ENCODE measurements at regions of chr7 and their contacts with region 1.

Region 1: DNA sequence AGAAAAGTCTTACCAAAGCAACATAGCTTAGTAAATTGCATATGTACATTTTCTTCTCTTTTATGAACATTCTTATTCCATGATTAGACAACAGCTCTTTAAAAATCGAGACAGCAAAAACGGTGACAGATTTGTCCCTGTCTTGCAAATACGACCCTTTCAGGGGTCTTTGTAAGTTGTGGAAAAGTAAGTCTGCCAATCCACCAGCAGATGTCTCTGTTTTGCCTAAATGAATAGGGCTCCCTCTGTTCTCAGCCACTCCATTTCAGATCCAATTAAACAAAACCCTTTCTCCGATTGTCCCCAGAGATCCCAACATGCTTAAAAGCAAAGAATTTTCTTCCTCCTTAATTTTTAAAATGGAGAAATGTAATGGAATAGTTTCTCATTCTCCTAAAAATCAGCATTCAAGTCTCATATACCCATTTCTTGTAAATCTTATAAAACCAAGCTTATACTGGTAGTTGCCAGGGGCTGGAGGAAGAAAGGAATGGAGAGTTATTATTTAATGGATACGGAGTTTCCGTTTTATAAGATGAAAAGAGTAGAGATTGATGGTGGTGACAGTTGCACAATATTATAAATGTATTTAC is 61.0 kb upstream of the NFE2L3 start:
- H3K4me3 ChIP-seq: no peak overlapping the region
- H3K27ac ChIP-seq: no peak overlapping the region; the same call in 1 of the 2 replicates
- H3K4me1 ChIP-seq: no peaks in the 10 kb centered on the region
- CTCF ChIP-seq: peak; percentile 49

Region 2: GRCh38 chr7:26071622-26072456 is 19.2 kb before region 1 on chr7:
- CTCF ChIA-PET with region 1: interaction called, 11 read pairs
- POLR2A ChIA-PET with region 1: no interaction called
- H3K4me3 ChIP-seq: no peak overlapping the region
- H3K27ac ChIP-seq: no peak overlapping the region
- H3K4me1 ChIP-seq: peaks cover 13% of the 10 kb centered on the region
- CTCF ChIP-seq: no peak

Region 3: GRCh38 chr7:26103596-26103995 is 12.6 kb after region 1 on chr7:
- CTCF ChIA-PET with region 1: interaction called, 20 read pairs
- POLR2A ChIA-PET with region 1: no interaction called
- H3K4me3 ChIP-seq: no peak overlapping the region
- H3K27ac ChIP-seq: no peak overlapping the region
- H3K4me1 ChIP-seq: no peaks in the 10 kb centered on the region
- CTCF ChIP-seq: no peak

Region 4: GRCh38 chr7:26187380-26188205 is 96.6 kb after region 1 on chr7:
- CTCF ChIA-PET with region 1: interaction called, 21 read pairs
- POLR2A ChIA-PET with region 1: interaction called, 9 read pairs
- H3K4me3 ChIP-seq: no peak overlapping the region
- H3K27ac ChIP-seq: no peak overlapping the region
- H3K4me1 ChIP-seq: no peaks in the 10 kb centered on the region; the same call in 1 of the 2 replicates
- CTCF ChIP-seq: no peak

Region 5: DNA sequence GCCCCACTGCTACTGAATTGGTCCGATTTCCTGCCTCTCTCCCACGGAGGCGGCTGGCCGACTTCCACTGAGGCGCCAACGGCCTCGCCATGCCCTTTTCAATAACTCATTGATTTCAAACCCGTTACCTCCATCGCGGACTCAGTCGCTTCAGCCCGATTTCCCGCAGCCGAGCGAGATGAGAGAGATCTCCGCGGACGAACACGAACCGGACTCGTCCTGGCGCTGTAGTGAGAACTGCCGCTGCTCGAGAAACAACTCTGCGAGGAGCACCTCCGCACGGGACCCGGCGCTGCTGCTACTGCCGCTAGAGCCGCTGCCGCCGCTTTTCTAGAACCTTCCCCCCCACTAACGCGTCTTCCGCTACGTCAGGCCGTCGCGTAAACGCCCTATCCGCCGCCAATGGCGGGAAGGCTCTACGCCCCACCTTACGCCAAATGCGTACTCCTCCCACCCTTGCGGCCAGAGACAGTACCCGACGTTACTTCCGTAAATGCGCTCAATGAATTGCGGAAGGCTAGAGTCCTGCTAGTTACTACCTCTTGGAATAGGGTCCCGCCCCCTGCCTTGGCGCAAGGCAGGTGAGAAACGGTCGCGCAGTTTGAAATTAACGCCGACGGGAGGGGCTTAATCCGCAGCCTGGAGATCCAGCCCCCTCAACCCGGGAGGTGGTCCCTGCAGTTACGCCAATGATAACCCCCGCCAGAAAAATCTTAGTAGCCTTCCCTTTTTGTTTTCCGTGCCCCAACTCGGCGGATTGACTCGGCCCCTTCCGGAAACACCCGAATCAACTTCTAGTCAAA is 109.6 kb after region 1 on chr7 and contains the start of gene HNRNPA2B1:
- CTCF ChIA-PET with region 1: interaction called, 48 read pairs
- POLR2A ChIA-PET with region 1: interaction called, 5 read pairs
- H3K4me3 ChIP-seq: peak within 1 kb of the TSS; percentile 100
- H3K27ac ChIP-seq: peak within 1 kb of the TSS; percentile 100
- H3K4me1 ChIP-seq: peaks cover 11% of the 10 kb centered on the region; the same call in 1 of the 2 replicates
- CTCF ChIP-seq: no peak; the same call in 1 of the 2 replicates

Region 6: DNA sequence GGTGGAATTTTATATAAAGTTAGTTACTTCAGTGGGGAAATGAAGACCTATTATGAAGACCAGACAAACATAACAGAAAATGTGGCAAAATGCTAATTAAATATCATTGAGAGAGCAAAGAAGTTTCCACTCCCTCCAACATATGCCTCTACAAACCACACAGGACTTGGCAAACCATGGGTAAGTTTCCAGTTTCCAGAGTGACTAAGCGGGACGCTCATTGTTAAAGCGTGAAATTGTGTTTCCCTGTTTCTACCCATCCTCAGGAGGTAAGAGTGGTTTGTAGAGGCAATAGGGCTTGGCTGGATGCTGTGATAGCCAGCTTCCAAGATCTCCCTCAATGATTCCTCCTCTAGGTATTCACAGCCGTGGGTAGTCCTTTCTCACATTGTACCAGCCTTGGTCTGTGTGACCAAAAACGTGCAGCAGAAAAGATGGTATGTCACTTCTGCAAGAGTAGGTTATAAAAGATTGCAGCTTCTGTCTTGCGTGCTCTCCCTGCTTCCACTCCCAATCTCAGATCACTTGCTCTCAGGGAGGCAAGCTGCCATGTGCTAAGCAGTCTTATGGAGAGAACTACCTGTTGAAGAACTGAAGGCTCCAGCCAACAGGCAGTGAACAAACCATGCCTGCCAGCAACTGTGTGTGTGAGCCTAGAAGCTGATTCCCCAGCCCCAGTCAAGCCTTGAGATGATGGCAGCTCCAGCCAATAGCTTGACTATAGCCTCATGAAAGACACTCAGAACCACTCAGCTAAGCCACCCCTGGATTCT is 146.2 kb after region 1 on chr7:
- CTCF ChIA-PET with region 1: no interaction called
- POLR2A ChIA-PET with region 1: no interaction called
- H3K4me3 ChIP-seq: no peak overlapping the region
- H3K27ac ChIP-seq: no peak overlapping the region
- H3K4me1 ChIP-seq: no peaks in the 10 kb centered on the region
- CTCF ChIP-seq: no peak

Measured in HEK293 (cell line).